Caco-2 (cell line): ENCODE measurements at regions of chr10 and their contacts with region 1.

Region 1: DNA sequence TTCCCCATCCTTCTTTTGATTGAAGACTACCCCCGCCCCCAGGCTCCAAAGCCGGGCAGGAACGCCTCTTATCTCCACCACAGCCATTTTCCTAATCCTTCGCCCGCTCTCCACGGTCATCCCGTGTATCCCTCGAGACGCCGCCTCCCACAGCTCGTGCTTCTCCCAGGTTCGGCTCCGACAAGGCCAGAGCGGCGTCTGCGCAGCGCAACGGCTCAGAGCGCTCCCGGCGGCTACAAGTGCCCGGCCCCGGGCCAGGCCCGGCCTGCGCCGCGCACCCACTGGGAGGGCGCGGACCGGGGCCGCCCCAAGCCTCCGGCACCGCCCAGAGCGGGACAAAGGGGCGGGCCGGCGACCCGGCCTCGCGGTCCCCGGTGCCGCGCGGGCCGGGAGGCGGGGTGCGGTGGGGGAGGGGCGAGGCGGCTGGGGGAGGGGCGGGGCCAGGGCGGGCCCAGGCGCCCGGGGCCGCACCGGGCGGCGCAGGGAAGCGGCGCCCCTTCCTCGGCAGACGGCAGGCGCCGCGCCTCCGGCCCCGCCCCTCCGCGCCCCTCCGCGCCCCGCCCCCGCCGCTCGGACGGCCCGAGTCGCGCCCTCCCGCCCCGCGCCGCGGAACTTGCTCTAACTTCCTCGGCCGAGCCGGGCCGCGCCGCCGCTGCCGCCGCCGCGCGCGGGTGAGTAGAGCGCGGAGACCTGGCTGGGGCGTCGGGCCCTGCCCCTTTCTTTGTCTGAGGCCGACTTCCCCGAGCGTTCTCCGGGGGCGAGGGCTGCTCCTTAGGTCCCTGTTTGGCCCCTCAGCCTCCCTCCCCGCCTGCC is at the start of gene TSPAN14:
- DNase-seq: peak; percentile 81 to 87
- H3K4me3 ChIP-seq: peak within 1 kb of the TSS; percentile 86
- H3K4me3 Mint-ChIP-seq: no peak within 1 kb of the TSS
- H3K27ac Mint-ChIP-seq: peak within 1 kb of the TSS; percentile 75
- H3K4me1 ChIP-seq: peaks cover 62% of the 10 kb centered on the region
- H3K4me1 Mint-ChIP-seq: peaks cover 26% of the 10 kb centered on the region
- H3K27me3 ChIP-seq: no peaks in the 10 kb centered on the region
- H3K27me3 Mint-ChIP-seq: no peaks in the 10 kb centered on the region
- CTCF ChIP-seq: no peak
- total RNA-seq, gene TSPAN14: 138 and 140 TPM in 2 replicates

Region 2: GRCh38 chr10:80513106-80513505 is 59.2 kb after region 1 on chr10:
- CTCF ChIA-PET with region 1: no interaction called
- POLR2A ChIA-PET with region 1: no interaction called
- intact Hi-C with region 1: no loop called
- DNase-seq: no peak
- H3K4me3 ChIP-seq: no peak overlapping the region
- H3K4me3 Mint-ChIP-seq: no peak overlapping the region
- H3K27ac Mint-ChIP-seq: no peak overlapping the region
- H3K4me1 ChIP-seq: peaks cover 31% of the 10 kb centered on the region
- H3K4me1 Mint-ChIP-seq: peaks cover 14% of the 10 kb centered on the region
- H3K27me3 ChIP-seq: no peaks in the 10 kb centered on the region
- H3K27me3 Mint-ChIP-seq: no peaks in the 10 kb centered on the region
- CTCF ChIP-seq: no peak

Region 3: GRCh38 chr10:80614576-80615416 is 160.9 kb after region 1 on chr10:
- CTCF ChIA-PET with region 1: no interaction called
- POLR2A ChIA-PET with region 1: no interaction called
- intact Hi-C with region 1: loop called (anchors 1 kb)
- DNase-seq: no peak
- H3K4me3 ChIP-seq: no peak overlapping the region
- H3K4me3 Mint-ChIP-seq: no peak overlapping the region
- H3K27ac Mint-ChIP-seq: no peak overlapping the region
- H3K4me1 ChIP-seq: no peaks in the 10 kb centered on the region; the same call in 1 of the 2 replicates
- H3K4me1 Mint-ChIP-seq: no peaks in the 10 kb centered on the region
- H3K27me3 ChIP-seq: no peaks in the 10 kb centered on the region
- H3K27me3 Mint-ChIP-seq: peaks cover 3% of the 10 kb centered on the region
- CTCF ChIP-seq: no peak

Region 4: GRCh38 chr10:81096558-81096957 is 642.7 kb after region 1 on chr10:
- CTCF ChIA-PET with region 1: no interaction called
- POLR2A ChIA-PET with region 1: no interaction called
- intact Hi-C with region 1: no loop called
- DNase-seq: no peak
- H3K4me3 ChIP-seq: no peak overlapping the region
- H3K4me3 Mint-ChIP-seq: no peak overlapping the region
- H3K27ac Mint-ChIP-seq: no peak overlapping the region
- H3K4me1 ChIP-seq: no peaks in the 10 kb centered on the region
- H3K4me1 Mint-ChIP-seq: no peaks in the 10 kb centered on the region
- H3K27me3 ChIP-seq: no peaks in the 10 kb centered on the region
- H3K27me3 Mint-ChIP-seq: no peaks in the 10 kb centered on the region
- CTCF ChIP-seq: no peak